ENCODE measurements at regions of chr18 and their contacts with region 1.

Region 1: GRCh38 chr18:74551936-74552555 is 17.7 kb downstream of the CNDP1 start:
- DNase-seq: peak; percentile 86
- H3K4me3 Mint-ChIP-seq: no peak overlapping the region
- H3K27ac Mint-ChIP-seq: no peak overlapping the region
- H3K4me1 Mint-ChIP-seq: peaks cover 15% of the 10 kb centered on the region
- H3K27me3 Mint-ChIP-seq: peaks cover 38% of the 10 kb centered on the region
- CTCF ChIP-seq: peak; percentile 78

Region 2: GRCh38 chr18:74353169-74353775 is 198.8 kb before region 1 on chr18:
- CTCF ChIA-PET with region 1: interaction called, 18 read pairs
- intact Hi-C with region 1: loop called (anchors 1 kb)
- DNase-seq: peak; percentile 63
- H3K4me3 Mint-ChIP-seq: no peak overlapping the region
- H3K27ac Mint-ChIP-seq: no peak overlapping the region
- H3K4me1 Mint-ChIP-seq: peaks cover 9% of the 10 kb centered on the region
- H3K27me3 Mint-ChIP-seq: peaks cover 11% of the 10 kb centered on the region
- CTCF ChIP-seq: peak; percentile 69

Region 3: DNA sequence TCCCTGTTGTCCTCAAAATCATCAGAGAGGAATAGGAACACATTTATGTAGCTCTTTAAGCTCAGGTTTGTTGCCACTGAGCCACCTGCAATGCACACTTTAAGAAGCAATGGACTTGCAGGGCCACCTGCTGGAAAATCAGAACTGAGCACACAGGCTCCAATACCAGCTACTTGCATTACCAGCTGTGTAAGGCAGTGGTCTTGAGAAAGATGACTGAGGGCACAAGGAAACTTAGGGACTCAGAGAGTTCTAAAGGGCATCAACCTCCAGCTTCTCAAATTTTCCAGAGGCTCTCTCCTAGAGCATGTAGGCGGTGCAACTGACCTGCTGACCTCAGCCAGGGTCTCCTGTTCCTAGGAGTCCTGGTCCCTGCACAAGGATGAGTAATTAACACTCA is 58.4 kb before region 1 on chr18:
- CTCF ChIA-PET with region 1: interaction called, 17 read pairs
- intact Hi-C with region 1: loop called (anchors 2 kb)
- DNase-seq: peak; percentile 61
- H3K4me3 Mint-ChIP-seq: no peak overlapping the region
- H3K27ac Mint-ChIP-seq: no peak overlapping the region
- H3K4me1 Mint-ChIP-seq: peaks cover 17% of the 10 kb centered on the region
- H3K27me3 Mint-ChIP-seq: peaks cover 11% of the 10 kb centered on the region
- CTCF ChIP-seq: peak; percentile 63

Region 4: GRCh38 chr18:74499633-74500032 is 52.4 kb before region 1 on chr18:
- CTCF ChIA-PET with region 1: interaction called, 7 read pairs
- intact Hi-C with region 1: loop called (anchors 2 kb)
- DNase-seq: peak; percentile 66
- H3K4me3 Mint-ChIP-seq: peak overlapping the region; percentile 71
- H3K27ac Mint-ChIP-seq: peak overlapping the region; percentile 93
- H3K4me1 Mint-ChIP-seq: peaks cover 46% of the 10 kb centered on the region
- H3K27me3 Mint-ChIP-seq: no peaks in the 10 kb centered on the region
- CTCF ChIP-seq: no peak